HepG2 (cell line): ENCODE measurements at regions of chr6 and their contacts with region 1.

Region 1: GRCh38 chr6:81752138-81752920 is at the start of gene TENT5A:
- DNase-seq: peak; percentile 83
- ATAC-seq: peak; percentile 89
- H3K4me3 ChIP-seq: peak within 1 kb of the TSS; percentile 79 to 91 (median 90)
- H3K27ac ChIP-seq: peak within 1 kb of the TSS; percentile 92
- H3K4me1 ChIP-seq: peaks cover 47% of the 10 kb centered on the region
- H3K27me3 ChIP-seq: no peaks in the 10 kb centered on the region
- CTCF ChIP-seq: peak; percentile 48; the same call in 1 of the 2 replicates
- EP300 ChIP-seq: no peak; a peak in 1 of 4 replicates
- POLR2A ChIP-seq: peak; percentile 59 to 78; a peak in 3 of 4 replicates
- RAD21 ChIP-seq: 0 out of 2 replicates have a peak, but pooled peaks have one; percentile 5
- total RNA-seq, gene TENT5A: 13.8 and 15.4 TPM in 2 replicates

Region 2: GRCh38 chr6:81491454-81492101 is 260.8 kb before region 1 on chr6:
- CTCF ChIA-PET with region 1: no interaction called
- POLR2A ChIA-PET with region 1: no interaction called
- in situ Hi-C with region 1: no loop called
- intact Hi-C with region 1: loop called (anchors 5 kb)
- DNase-seq: peak; percentile 70
- ATAC-seq: peak; percentile 83
- H3K4me3 ChIP-seq: no peak overlapping the region; a peak in 1 of 6 replicates
- H3K27ac ChIP-seq: peak overlapping the region; percentile 44
- H3K4me1 ChIP-seq: peaks cover 24% of the 10 kb centered on the region
- H3K27me3 ChIP-seq: no peaks in the 10 kb centered on the region
- CTCF ChIP-seq: no peak
- EP300 ChIP-seq: peak in 1 of 2 experiments; percentile 76; a peak in 1 of 4 replicates
- POLR2A ChIP-seq: no peak
- RAD21 ChIP-seq: no peak

Region 3: DNA sequence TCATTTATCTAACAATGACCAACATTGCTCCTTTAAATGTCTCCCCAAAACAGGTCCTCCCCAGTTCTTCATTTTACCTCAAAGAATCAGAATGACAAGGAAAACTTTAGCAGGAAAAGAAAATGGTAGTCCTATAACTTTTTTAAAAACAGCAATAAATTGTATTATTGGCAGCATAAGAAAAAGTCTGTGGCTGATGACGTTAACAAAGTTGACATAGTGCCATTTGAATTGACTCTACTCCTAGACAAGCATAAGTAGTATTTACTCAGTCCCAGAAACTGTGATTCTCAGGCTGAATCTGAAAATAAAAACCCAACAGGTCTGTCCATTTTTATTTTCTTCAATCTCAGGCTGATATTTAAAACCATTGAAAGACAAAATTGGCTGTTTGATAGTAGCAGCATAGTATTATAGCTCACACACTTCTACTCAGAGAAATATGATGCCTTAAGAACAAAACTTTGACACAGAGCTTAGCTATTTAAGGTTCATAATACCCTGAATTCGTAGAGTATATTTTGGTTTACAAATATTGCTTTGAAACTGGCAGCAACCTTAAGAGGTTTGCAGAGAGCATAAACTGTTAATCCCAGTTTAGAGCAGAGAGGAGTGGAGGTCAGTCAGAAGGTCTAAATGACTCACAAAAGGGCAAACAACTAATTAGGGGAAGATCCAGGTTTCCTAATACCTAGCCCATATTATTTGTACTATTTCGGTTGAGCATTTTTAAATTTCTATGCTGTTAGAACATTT is 35.2 kb after region 1 on chr6:
- CTCF ChIA-PET with region 1: no interaction called
- POLR2A ChIA-PET with region 1: interaction called, 17 read pairs
- in situ Hi-C with region 1: no loop called
- intact Hi-C with region 1: no loop called
- DNase-seq: peak; percentile 58
- ATAC-seq: peak; percentile 86
- H3K4me3 ChIP-seq: peak overlapping the region in 1 of 3 experiments; percentile 1; a peak in 1 of 6 replicates
- H3K27ac ChIP-seq: no peak overlapping the region
- H3K4me1 ChIP-seq: peaks cover 44% of the 10 kb centered on the region
- H3K27me3 ChIP-seq: no peaks in the 10 kb centered on the region
- CTCF ChIP-seq: no peak
- EP300 ChIP-seq: 0 out of 4 replicates have a peak, but pooled peaks of 1 of the 2 experiments have one; percentile 19
- POLR2A ChIP-seq: no peak
- RAD21 ChIP-seq: no peak

Region 4: GRCh38 chr6:81859884-81860283 is 107.6 kb after region 1 on chr6:
- CTCF ChIA-PET with region 1: no interaction called
- POLR2A ChIA-PET with region 1: interaction called, 3 read pairs
- in situ Hi-C with region 1: no loop called
- intact Hi-C with region 1: loop called (anchors 1 kb)
- DNase-seq: no peak
- ATAC-seq: no peak
- H3K4me3 ChIP-seq: no peak overlapping the region
- H3K27ac ChIP-seq: no peak overlapping the region
- H3K4me1 ChIP-seq: peaks cover 40% of the 10 kb centered on the region
- H3K27me3 ChIP-seq: no peaks in the 10 kb centered on the region
- CTCF ChIP-seq: no peak
- EP300 ChIP-seq: no peak
- POLR2A ChIP-seq: no peak
- RAD21 ChIP-seq: no peak

Region 5: GRCh38 chr6:81997091-81997926 is 245.0 kb after region 1 on chr6:
- CTCF ChIA-PET with region 1: no interaction called
- POLR2A ChIA-PET with region 1: no interaction called
- in situ Hi-C with region 1: loop called (anchors 5 kb)
- intact Hi-C with region 1: no loop called
- DNase-seq: no peak
- ATAC-seq: no peak
- H3K4me3 ChIP-seq: no peak overlapping the region
- H3K27ac ChIP-seq: no peak overlapping the region
- H3K4me1 ChIP-seq: peaks cover 29% of the 10 kb centered on the region
- H3K27me3 ChIP-seq: no peaks in the 10 kb centered on the region
- CTCF ChIP-seq: no peak
- EP300 ChIP-seq: no peak
- POLR2A ChIP-seq: no peak
- RAD21 ChIP-seq: no peak

Region 6: DNA sequence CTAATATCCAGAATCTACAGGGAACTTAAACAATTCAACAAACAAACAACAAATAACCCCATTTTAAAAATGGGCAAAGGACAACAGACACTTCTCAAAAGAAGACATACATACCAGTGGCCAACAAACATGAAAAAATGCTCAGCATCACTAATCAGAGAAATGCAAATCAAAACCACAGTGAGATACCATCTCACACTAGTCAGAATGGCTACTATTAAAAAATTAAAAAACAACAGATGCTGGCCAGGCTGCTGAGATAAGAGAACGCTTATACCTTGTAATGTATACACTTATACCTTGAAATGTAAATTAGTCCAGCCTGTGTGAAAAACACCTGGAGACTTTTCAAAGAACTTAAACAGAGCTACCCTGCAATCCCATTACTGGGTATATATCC is 328.4 kb after region 1 on chr6:
- CTCF ChIA-PET with region 1: no interaction called
- POLR2A ChIA-PET with region 1: interaction called, 5 read pairs
- in situ Hi-C with region 1: no loop called
- intact Hi-C with region 1: loop called (anchors 5 kb)
- DNase-seq: no peak
- ATAC-seq: no peak
- H3K4me3 ChIP-seq: no peak overlapping the region
- H3K27ac ChIP-seq: no peak overlapping the region
- H3K4me1 ChIP-seq: peaks cover 61% of the 10 kb centered on the region
- H3K27me3 ChIP-seq: no peaks in the 10 kb centered on the region
- CTCF ChIP-seq: no peak
- EP300 ChIP-seq: no peak
- POLR2A ChIP-seq: no peak
- RAD21 ChIP-seq: no peak